Mammary epithelial cell (primary cell): ENCODE measurements at regions of chr10 and their contacts with region 1.

Region 1: GRCh38 chr10:88932539-88933256 is 19.9 kb downstream of the ACTA2 start:
- DNase-seq: peak; percentile 84
- H3K4me3 ChIP-seq: no peak overlapping the region
- H3K27ac ChIP-seq: no peak overlapping the region
- H3K4me1 ChIP-seq: peaks cover 18% of the 10 kb centered on the region
- H3K27me3 ChIP-seq: no peaks in the 10 kb centered on the region
- CTCF ChIP-seq: peak; percentile 88 to 91

Region 2: GRCh38 chr10:88687853-88688467 is 244.7 kb before region 1 on chr10:
- CTCF ChIA-PET with region 1: no interaction called
- dilution Hi-C with region 1: no loop called
- in situ Hi-C with region 1: no loop called
- intact Hi-C with region 1: loop called (anchors 1 kb)
- DNase-seq: no peak
- H3K4me3 ChIP-seq: no peak overlapping the region
- H3K27ac ChIP-seq: no peak overlapping the region
- H3K4me1 ChIP-seq: peaks cover 4% of the 10 kb centered on the region
- H3K27me3 ChIP-seq: no peaks in the 10 kb centered on the region
- CTCF ChIP-seq: peak; percentile 79 to 82

Region 3: GRCh38 chr10:88765816-88766215 is 166.9 kb before region 1 on chr10:
- CTCF ChIA-PET with region 1: no interaction called
- dilution Hi-C with region 1: no loop called
- in situ Hi-C with region 1: no loop called
- intact Hi-C with region 1: no loop called
- DNase-seq: no peak
- H3K4me3 ChIP-seq: no peak overlapping the region
- H3K27ac ChIP-seq: no peak overlapping the region
- H3K4me1 ChIP-seq: no peaks in the 10 kb centered on the region
- H3K27me3 ChIP-seq: no peaks in the 10 kb centered on the region
- CTCF ChIP-seq: no peak

Region 4: GRCh38 chr10:88865281-88865876 is 67.3 kb before region 1 on chr10:
- CTCF ChIA-PET with region 1: interaction called, 5 read pairs
- dilution Hi-C with region 1: no loop called
- in situ Hi-C with region 1: no loop called
- intact Hi-C with region 1: loop called (anchors 2 kb)
- DNase-seq: peak; percentile 27
- H3K4me3 ChIP-seq: no peak overlapping the region
- H3K27ac ChIP-seq: no peak overlapping the region
- H3K4me1 ChIP-seq: no peaks in the 10 kb centered on the region
- H3K27me3 ChIP-seq: no peaks in the 10 kb centered on the region
- CTCF ChIP-seq: peak; percentile 30 to 58

Region 5: DNA sequence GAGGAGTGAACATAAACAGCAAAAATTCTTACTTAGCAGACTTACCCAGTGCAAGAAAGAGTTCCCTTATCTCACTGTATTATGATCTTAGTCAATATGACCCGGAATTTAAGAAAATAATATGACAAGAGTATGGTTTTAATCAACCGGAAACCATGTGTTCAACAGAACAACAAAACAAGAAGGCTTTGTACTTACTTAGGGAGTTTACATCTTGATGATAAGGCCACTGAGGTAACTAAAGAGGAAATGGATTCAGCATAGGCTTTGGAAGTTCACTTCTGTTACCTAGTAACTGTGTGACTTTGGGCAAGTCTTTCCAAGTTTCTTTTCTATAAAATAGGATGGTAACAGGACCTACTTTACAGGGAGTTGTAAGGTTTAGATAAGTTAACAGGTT is 50.5 kb after region 1 on chr10:
- CTCF ChIA-PET with region 1: interaction called, 12 read pairs
- dilution Hi-C with region 1: no loop called
- in situ Hi-C with region 1: loop called in 1 of 2 experiments (anchors 5 kb)
- intact Hi-C with region 1: loop called (anchors 1 kb)
- DNase-seq: no peak
- H3K4me3 ChIP-seq: no peak overlapping the region
- H3K27ac ChIP-seq: no peak overlapping the region
- H3K4me1 ChIP-seq: peaks cover 9% of the 10 kb centered on the region
- H3K27me3 ChIP-seq: no peaks in the 10 kb centered on the region
- CTCF ChIP-seq: no peak

Region 6: DNA sequence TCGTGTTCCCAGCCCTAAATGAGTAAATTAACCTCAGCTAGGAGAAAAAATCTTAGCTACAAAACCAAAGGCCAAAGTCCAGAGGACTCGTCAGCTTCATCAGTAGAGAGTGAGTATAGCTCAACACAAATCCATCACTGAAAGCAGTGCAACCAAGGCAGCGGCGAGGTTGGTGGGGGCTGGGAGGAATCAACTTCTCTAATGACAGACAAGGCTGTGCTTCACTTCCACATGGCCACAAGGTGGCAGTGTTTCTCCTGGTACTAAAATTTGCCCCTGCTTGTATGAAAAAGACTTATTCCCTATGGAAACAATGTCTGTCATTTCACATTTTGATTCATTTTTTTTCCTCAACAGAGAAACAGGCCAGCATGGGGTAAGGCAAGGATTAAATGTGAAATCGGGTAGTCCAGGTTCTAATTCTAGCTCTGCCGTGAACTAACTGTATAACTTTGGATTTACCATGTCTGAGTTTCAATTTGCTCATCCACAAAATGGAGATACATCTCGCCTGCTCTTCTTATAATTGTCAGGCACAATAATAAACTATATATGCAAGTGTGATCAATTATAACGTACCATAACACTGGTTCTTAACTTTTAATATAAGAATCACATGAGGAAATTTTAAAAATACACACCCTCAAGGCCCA is 97.2 kb after region 1 on chr10:
- CTCF ChIA-PET with region 1: no interaction called
- dilution Hi-C with region 1: no loop called
- in situ Hi-C with region 1: no loop called
- intact Hi-C with region 1: loop called (anchors 1 kb)
- DNase-seq: peak; percentile 62
- H3K4me3 ChIP-seq: no peak overlapping the region
- H3K27ac ChIP-seq: no peak overlapping the region
- H3K4me1 ChIP-seq: peaks cover 18% of the 10 kb centered on the region
- H3K27me3 ChIP-seq: no peaks in the 10 kb centered on the region
- CTCF ChIP-seq: peak; percentile 77 to 86

Region 7: DNA sequence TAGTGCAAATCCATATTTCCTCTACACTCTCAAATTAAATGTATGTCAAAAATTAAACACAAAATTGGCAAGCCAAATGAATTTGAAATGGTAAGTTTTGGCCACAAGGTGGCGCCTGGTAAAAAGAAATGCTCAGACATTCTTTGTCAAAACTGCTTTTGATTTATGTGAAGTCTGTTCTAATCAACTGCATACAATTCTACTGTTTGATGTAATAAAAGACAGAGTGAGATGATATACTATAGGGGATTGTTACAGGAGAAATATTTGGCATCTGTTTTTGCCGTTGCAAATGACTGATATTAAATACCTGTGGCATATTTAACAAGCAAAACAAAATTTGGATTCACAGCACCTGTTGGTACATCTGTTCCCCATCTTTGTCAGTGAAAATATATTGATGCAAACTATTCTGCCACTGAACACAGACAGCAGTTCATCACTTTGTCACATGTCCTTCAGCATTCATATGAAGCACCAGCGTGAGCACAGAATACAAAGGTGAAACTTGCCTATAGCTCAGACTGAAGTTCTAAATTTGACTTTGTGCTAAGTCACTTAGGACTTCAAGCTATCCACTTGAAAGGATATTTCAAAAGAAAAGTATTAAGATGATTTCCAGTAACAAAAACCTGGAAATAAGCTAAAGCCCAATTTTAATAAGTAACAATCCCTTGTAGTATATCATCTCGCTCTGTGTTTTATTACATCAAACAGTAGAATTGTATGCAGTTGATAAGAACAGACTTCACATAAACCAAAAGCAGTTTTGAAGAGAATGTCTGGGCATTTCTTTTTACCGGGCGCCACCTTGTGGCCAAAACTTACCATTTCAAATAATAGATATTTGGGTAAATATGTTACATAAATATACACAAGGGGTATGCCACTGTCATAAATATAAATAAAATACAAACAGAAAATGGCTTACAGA is 284.6 kb after region 1 on chr10:
- CTCF ChIA-PET with region 1: no interaction called
- dilution Hi-C with region 1: no loop called
- in situ Hi-C with region 1: loop called in 1 of 2 experiments (anchors 5 kb)
- intact Hi-C with region 1: loop called (anchors 1 kb)
- DNase-seq: peak; percentile 36
- H3K4me3 ChIP-seq: no peak overlapping the region
- H3K27ac ChIP-seq: peak overlapping the region; percentile 15
- H3K4me1 ChIP-seq: peaks cover 10% of the 10 kb centered on the region
- H3K27me3 ChIP-seq: no peaks in the 10 kb centered on the region
- CTCF ChIP-seq: peak; percentile 61 to 69